ENCODE measurements at regions of chr2 and their contacts with region 1.

Region 1: GRCh38 chr2:164831887-164832286 is 9.7 kb downstream of the COBLL1 start:
- DNase-seq: no peak
- H3K4me3 Mint-ChIP-seq: no peak overlapping the region
- H3K27ac Mint-ChIP-seq: no peak overlapping the region
- H3K4me1 Mint-ChIP-seq: no peaks in the 10 kb centered on the region
- H3K27me3 Mint-ChIP-seq: no peaks in the 10 kb centered on the region

Region 2: DNA sequence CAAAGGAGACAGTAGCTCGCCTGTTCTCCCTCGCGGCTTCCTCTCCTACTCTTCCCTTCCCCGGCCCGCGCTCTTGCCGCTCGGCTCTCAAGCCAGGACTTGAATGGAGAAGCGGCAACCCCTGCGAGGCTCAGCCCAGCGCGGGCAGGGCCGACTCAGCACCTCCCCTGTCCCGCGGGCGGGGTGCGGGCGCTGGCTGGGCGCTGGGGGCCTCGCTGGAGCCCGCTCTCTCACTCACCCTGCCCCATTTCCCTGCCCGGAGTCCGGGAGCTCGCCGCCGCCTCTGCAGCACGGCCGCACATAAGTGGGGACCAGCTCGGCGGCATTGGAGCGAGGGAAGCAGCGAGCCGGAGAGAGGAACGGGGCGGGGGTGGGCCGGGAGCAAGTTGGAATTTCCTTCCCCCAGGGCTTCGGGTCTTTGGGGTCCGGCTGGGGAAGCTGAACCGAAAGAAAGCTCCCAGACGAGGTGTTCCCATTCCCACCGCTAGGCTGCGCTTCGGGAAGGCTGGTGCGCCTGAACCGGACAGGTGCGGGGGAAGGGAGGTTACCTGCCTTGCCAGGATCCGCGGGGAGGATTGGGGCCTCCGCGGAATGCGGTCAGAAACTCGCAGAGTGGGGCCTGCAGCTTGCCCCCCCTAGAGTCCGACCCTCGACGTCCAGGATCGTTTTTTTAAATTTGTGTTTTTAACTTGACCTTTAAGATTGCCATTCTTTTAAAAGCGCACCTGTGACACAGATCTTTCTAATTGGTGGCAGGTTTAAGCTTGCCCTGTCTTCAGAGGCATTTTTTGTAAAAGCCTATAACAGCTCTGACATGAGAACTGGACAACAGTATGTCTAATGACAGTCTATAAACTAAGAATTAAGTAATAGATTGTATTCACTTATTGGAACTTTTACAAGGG is 10.1 kb after region 1 on chr2 and contains the start of gene COBLL1:
- CTCF ChIA-PET with region 1: interaction called, 12 read pairs
- POLR2A ChIA-PET with region 1: no interaction called
- DNase-seq: peak; percentile 27
- H3K4me3 Mint-ChIP-seq: peak within 1 kb of the TSS; percentile 64
- H3K27ac Mint-ChIP-seq: no peak within 1 kb of the TSS
- H3K4me1 Mint-ChIP-seq: peaks cover 10% of the 10 kb centered on the region
- H3K27me3 Mint-ChIP-seq: peaks cover 38% of the 10 kb centered on the region
- total RNA-seq, gene COBLL1: not detected

Measured in activated CD4-positive, alpha-beta memory T cell treated with anti-CD3 and anti-CD28 coated beads, Interleukin-2, amount 10 ng/mL, durations not matched to agents 7 days and 5 days (primary cell).